Heart right ventricle (tissue), 16 donors: ENCODE measurements at regions of chr20 and their contacts with region 1.

Region 1: DNA sequence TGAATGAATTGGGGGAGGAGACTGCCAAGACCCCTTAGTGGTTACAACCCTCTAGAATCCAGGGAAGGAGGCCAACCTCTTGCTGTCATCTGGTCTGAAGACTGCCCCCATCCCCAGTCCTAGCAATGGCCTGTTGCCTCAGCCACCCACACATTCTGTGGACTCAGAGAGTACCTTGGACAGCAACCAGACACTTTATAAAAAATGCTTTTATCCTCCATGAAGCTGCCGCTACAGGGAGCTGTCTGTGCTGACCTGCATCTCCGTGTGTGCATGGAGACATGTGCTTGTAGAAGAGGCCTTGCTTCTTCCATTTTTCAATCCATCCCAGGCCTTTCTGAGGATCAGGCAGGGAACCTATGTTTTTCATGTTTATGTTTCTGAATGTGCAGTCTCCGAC is 15.2 kb downstream of the CDH22 start:
- DNase-seq: no peak
- ATAC-seq: peak in 1 of 8 donors; percentile 60
- H3K4me3 ChIP-seq: no peak overlapping the region
- H3K27ac ChIP-seq: no peak overlapping the region
- H3K4me1 ChIP-seq: no peaks in the 10 kb centered on the region
- H3K27me3 ChIP-seq: peaks cover 0 to 87% (median 63%) of the 10 kb centered on the region in 7 donors
- CTCF ChIP-seq: no peak

Region 2: GRCh38 chr20:46070215-46070900 is 222.7 kb before region 1 on chr20:
- intact Hi-C with region 1: no loop called
- DNase-seq: no peak
- ATAC-seq: no peak
- H3K4me3 ChIP-seq: no peak overlapping the region
- H3K27ac ChIP-seq: no peak overlapping the region
- H3K4me1 ChIP-seq: peaks cover 0 to 20% (median 0%) of the 10 kb centered on the region in 9 donors
- H3K27me3 ChIP-seq: no peaks in the 10 kb centered on the region
- CTCF ChIP-seq: no peak

Region 3: DNA sequence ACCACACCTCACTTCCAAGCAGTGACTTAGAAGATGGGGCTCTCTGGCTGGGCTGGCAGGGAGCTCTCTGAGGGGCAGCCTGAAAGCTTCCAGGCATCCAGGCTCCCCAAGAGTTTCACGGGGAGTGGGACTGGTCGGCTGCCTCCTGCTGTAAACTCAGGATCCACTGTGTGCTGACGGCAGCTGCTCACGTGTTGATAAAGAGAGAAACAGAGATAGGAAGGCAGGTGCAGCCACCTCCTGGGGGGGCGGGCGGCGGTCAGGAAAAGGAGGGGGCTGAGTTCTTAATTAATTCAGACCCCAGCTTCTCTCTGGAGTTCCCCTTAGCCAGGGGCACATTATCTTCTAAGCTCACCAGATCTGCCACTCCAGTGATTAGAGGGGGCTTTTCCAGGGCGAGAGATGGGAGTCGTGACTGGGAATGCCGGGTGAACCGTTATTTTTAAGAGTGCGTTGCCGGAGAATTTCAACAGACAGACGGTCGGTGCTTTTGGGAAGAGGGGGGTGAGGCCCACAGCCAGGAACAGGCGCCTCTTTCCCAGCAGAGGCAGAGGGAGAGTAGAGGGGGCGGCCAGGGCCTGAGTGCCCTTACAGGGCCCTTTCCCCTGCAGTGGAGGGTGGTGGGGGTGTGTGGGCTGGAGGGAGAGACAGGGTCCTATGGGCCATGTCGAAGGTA is 104.1 kb before region 1 on chr20:
- intact Hi-C with region 1: no loop called
- DNase-seq: no peak
- ATAC-seq: no peak
- H3K4me3 ChIP-seq: no peak overlapping the region
- H3K27ac ChIP-seq: no peak overlapping the region
- H3K4me1 ChIP-seq: no peaks in the 10 kb centered on the region
- H3K27me3 ChIP-seq: peaks cover 0 to 58% (median 6%) of the 10 kb centered on the region in 7 donors
- CTCF ChIP-seq: no peak

Region 4: GRCh38 chr20:46343348-46343974 is 50.4 kb after region 1 on chr20:
- intact Hi-C with region 1: loop called in 1 of 10 experiments (anchors 2 kb)
- DNase-seq: no peak
- ATAC-seq: peak in 3 of 8 donors; percentile 14 to 48 (median 34)
- H3K4me3 ChIP-seq: peak overlapping the region in 3 of 10 donors; percentile 3 to 19 (median 8)
- H3K27ac ChIP-seq: no peak overlapping the region
- H3K4me1 ChIP-seq: peaks cover 3 to 23% (median 15%) of the 10 kb centered on the region in 9 donors
- H3K27me3 ChIP-seq: peaks cover 0 to 56% (median 52%) of the 10 kb centered on the region in 7 donors
- CTCF ChIP-seq: no peak